ENCODE measurements at regions of chr2 and their contacts with region 1.

Region 1: DNA sequence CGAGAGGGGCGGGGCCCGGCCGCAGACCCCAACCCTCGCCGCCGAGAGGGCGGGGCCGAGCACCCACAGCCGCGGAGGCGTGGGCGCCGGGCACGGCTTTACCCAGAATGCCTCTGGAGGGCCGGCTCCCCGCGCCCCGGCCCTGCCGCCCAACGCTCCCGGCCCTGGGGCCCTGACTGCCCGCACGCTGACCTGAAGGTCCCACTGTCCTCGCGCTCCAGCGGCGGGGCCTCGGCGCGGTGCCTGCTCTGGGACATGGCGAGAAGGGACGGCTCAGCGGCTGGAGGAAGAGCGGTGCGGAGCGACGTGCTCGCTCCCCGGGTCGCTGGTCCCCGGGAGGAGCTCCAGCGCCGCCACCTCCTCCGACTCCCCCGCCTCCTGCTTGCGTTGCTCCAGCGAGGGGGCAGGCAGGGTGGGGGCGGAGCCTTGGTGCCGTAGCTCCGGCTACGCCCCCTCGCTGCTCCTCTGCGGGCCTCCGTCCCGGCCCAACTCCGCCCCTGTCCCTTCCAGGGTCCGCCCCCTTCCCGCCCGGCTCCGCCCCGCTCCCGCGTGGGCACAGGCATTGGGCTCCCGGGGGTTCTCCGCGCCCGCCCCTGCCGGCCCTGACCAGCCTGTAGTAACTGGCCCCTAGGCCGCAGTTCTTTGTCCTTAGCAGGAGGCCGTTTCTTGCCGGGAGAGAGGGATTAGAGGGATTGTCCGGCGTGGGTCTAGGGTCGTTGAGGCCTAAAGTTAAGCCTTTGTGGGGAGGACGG is at the starts of genes PJVK and PRKRA:
- DNase-seq: peak; percentile 95
- H3K4me3 ChIP-seq: peak within 1 kb of the TSS; percentile 86
- H3K27ac ChIP-seq: peak within 1 kb of the TSS; percentile 97
- H3K27me3 ChIP-seq: no peaks in the 10 kb centered on the region
- CTCF ChIP-seq: no peak
- polyA plus RNA-seq, gene PJVK: 2.1 and 3.4 TPM in 2 replicates
- polyA plus RNA-seq, gene PRKRA: 47.5 and 58.6 TPM in 2 replicates

Region 2: GRCh38 chr2:177872286-177872685 is 578.7 kb before region 1 on chr2:
- CTCF ChIA-PET with region 1: no interaction called
- POLR2A ChIA-PET with region 1: no interaction called
- DNase-seq: no peak
- H3K4me3 ChIP-seq: no peak overlapping the region
- H3K27ac ChIP-seq: no peak overlapping the region
- H3K27me3 ChIP-seq: no peaks in the 10 kb centered on the region
- CTCF ChIP-seq: no peak

Region 3: DNA sequence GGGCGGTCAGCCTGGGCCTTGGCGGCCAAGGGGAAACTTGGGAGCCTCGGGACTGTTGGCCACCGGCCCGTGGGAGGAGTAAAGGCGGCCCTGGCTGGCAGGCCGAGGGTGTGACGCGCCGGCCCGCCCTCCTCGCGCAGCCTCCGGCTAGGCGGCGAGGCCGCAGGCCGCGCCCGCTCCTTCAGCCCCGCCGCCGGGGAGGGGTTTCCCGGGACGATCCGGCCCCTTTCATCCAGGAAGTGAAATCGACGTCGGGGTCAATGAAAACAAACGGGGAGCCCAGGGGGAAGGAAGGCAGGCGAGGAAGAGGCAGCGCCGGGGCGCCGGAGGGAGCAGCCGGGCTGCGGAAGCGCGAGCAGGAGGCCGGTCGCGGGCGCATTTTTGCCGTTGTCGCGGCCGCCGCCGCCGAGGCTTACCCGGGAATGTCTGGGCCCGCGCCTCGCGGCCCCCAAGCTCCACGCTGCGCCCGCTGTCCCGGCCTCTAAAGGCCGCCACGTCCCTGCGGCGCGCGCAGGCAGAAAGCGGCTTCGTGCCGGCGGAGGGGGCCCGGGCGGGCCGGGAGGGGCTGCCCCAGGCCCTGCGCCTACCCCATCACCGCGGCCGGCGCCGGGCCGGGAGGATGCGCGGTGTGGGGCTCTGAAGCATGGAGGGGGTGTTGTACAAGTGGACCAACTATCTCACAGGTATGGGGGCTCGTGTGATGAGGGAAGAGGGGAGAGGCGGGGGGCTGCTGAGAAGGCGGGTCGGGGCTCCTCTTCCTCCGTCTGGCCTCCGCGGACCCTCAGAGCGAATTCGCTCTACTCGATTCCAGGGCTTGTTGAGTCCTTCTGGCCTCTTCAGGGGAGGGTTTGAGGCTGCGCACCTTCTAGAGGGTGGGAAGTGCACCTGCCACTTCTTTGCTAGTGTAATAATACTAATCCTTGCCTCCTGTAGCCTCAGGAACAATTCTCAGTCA is 29.6 kb after region 1 on chr2 and contains the start of gene PLEKHA3:
- CTCF ChIA-PET with region 1: interaction called, 3 read pairs
- POLR2A ChIA-PET with region 1: interaction called, 13 read pairs
- DNase-seq: peak; percentile 91
- H3K4me3 ChIP-seq: peak within 1 kb of the TSS; percentile 83
- H3K27ac ChIP-seq: peak within 1 kb of the TSS; percentile 76
- H3K27me3 ChIP-seq: no peaks in the 10 kb centered on the region
- CTCF ChIP-seq: no peak
- polyA plus RNA-seq, gene PLEKHA3: 17.7 and 28.2 TPM in 2 replicates

Region 4: GRCh38 chr2:178530625-178531142 is 79.7 kb after region 1 on chr2:
- CTCF ChIA-PET with region 1: no interaction called
- POLR2A ChIA-PET with region 1: no interaction called
- DNase-seq: no peak
- H3K4me3 ChIP-seq: no peak overlapping the region
- H3K27ac ChIP-seq: no peak overlapping the region
- H3K27me3 ChIP-seq: no peaks in the 10 kb centered on the region
- CTCF ChIP-seq: no peak